Vagina (tissue), 2 donors: ENCODE measurements at regions of chr10 and their contacts with region 1.

Region 1: DNA sequence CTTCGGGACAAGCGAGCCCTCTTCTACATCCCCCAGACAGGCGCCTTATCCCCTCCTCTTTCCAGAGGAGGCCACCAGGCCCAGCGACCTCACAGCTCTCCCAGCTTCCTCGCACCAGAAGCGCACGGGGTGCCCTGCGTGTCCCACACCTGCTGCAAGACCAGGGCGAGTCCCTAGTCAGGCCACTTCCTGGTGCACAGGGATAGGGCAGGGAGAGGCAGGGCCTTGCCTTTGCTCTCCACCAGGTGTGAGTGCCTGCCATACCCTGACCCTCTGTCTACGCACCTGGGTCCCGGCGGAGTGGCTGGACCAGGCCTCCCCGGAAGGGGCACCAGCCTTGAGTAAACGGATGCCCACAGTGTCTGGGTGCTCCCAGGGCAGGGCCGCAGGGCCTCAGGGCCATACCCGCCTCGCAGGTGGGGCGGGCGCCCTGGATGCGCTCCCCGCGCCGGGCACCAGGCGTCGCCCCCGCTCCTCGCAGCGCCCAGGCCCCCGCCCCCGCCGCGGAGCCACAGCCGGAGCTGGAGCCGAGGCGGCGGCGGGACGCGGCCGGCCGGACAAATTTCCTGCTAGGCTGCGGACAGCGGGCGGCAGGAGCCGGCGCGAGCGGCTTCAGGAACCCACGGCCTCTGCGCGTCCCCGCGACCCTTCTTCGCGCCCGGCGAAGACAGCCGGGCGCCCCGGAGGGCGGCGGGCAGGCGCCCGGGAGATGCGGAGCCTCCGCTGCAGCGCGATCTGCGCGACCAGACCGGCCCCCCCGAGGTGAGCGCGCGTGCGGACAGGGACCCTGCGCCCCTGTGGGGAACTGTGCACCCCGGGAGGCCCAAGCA is at the start of gene PTPRE:
- DNase-seq: peak in 1 of 2 donors; percentile 92
- H3K4me3 ChIP-seq: peak within 1 kb of the TSS; percentile 47 to 49
- H3K27ac ChIP-seq: peak within 1 kb of the TSS; percentile 47
- H3K4me1 ChIP-seq: peaks cover 16% of the 10 kb centered on the region
- H3K27me3 ChIP-seq: no peaks in the 10 kb centered on the region
- CTCF ChIP-seq: peak; percentile 29 to 62 (median 45)
- POLR2A ChIP-seq: no peak
- total RNA-seq, gene PTPRE: 77.6 TPM

Region 2: GRCh38 chr10:128011175-128011979 is 104.6 kb after region 1 on chr10:
- intact Hi-C with region 1: loop called (anchors 2 kb)
- DNase-seq: no peak
- H3K4me3 ChIP-seq: no peak overlapping the region
- H3K27ac ChIP-seq: no peak overlapping the region
- H3K4me1 ChIP-seq: peaks cover 8% of the 10 kb centered on the region
- H3K27me3 ChIP-seq: no peaks in the 10 kb centered on the region
- CTCF ChIP-seq: peak; percentile 85 to 92 (median 86)
- POLR2A ChIP-seq: no peak